Activated CD8-positive, alpha-beta T cell treated with anti-CD3 and anti-CD28 coated beads for 36 hours (primary cell): ENCODE measurements at regions of chr11 and their contacts with region 1.

Region 1: GRCh38 chr11:58567889-58568512 is 7.7 kb downstream of the LPXN start:
- DNase-seq: peak; percentile 89
- ATAC-seq: peak; percentile 97
- H3K4me3 Mint-ChIP-seq: peak overlapping the region; percentile 39
- H3K27ac Mint-ChIP-seq: peak overlapping the region; percentile 90
- H3K4me1 Mint-ChIP-seq: peaks cover 64% of the 10 kb centered on the region
- H3K27me3 Mint-ChIP-seq: no peaks in the 10 kb centered on the region
- CTCF ChIP-seq: peak; percentile 73

Region 2: GRCh38 chr11:58513747-58514367 is 54.1 kb before region 1 on chr11:
- CTCF ChIA-PET with region 1: no interaction called
- POLR2A ChIA-PET with region 1: no interaction called
- intact Hi-C with region 1: no loop called
- DNase-seq: peak; percentile 35
- ATAC-seq: peak; percentile 58
- H3K4me3 Mint-ChIP-seq: no peak overlapping the region
- H3K27ac Mint-ChIP-seq: no peak overlapping the region
- H3K4me1 Mint-ChIP-seq: no peaks in the 10 kb centered on the region
- H3K27me3 Mint-ChIP-seq: no peaks in the 10 kb centered on the region
- CTCF ChIP-seq: peak; percentile 47

Region 3: DNA sequence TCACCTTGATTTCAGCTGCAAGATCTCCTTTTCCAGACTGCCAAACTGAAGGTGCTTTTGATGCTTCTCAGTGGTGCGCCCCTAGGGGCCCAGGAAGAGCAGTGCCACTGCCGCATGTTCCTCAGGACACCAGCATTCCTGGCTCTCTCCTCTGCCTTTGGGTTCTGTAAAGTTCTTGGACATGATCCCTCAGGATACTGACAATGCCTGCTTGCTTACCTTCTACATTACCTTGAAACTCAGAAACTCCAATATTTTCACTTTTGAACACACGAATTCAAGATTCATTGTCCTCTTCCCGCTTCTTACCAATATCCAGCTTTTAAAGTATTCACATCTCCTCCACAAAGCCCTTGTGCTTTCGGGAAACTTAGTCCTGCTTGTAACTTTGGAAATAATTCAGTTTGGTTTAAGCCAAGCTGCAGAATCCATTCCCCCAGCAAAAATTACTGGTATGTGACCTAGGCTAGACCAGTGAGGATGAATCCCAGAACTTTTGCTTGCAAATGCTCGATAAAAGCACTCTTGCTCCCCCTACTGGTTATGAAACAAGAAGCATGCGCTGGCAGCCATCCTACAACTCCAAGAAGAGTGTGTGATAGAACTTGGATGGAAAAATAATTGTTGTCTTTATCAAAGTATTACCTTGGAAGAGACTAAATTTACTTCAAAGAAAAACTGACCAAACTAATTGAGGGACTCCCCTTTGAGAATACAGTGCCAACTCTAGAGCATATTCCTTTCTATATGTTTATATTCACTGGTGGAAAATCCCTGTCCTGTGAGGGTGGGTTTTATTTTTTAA is 43.6 kb before region 1 on chr11:
- CTCF ChIA-PET with region 1: interaction called, 35 read pairs
- POLR2A ChIA-PET with region 1: no interaction called
- intact Hi-C with region 1: loop called (anchors 2 kb)
- DNase-seq: peak; percentile 61
- ATAC-seq: peak; percentile 59
- H3K4me3 Mint-ChIP-seq: peak overlapping the region; percentile 72
- H3K27ac Mint-ChIP-seq: peak overlapping the region; percentile 96
- H3K4me1 Mint-ChIP-seq: peaks cover 62% of the 10 kb centered on the region
- H3K27me3 Mint-ChIP-seq: no peaks in the 10 kb centered on the region
- CTCF ChIP-seq: peak; percentile 90

Region 4: GRCh38 chr11:58597486-58598144 is 29.6 kb after region 1 on chr11:
- CTCF ChIA-PET with region 1: interaction called, 11 read pairs
- POLR2A ChIA-PET with region 1: no interaction called
- intact Hi-C with region 1: no loop called
- DNase-seq: no peak
- ATAC-seq: peak; percentile 87
- H3K4me3 Mint-ChIP-seq: no peak overlapping the region
- H3K27ac Mint-ChIP-seq: peak overlapping the region; percentile 43
- H3K4me1 Mint-ChIP-seq: peaks cover 85% of the 10 kb centered on the region
- H3K27me3 Mint-ChIP-seq: no peaks in the 10 kb centered on the region
- CTCF ChIP-seq: no peak

Region 5: GRCh38 chr11:58617976-58618557 is 50.1 kb after region 1 on chr11:
- CTCF ChIA-PET with region 1: interaction called, 13 read pairs
- POLR2A ChIA-PET with region 1: interaction called, 3 read pairs
- intact Hi-C with region 1: no loop called
- DNase-seq: peak; percentile 15
- ATAC-seq: peak; percentile 67
- H3K4me3 Mint-ChIP-seq: no peak overlapping the region
- H3K27ac Mint-ChIP-seq: peak overlapping the region; percentile 27
- H3K4me1 Mint-ChIP-seq: peaks cover 32% of the 10 kb centered on the region
- H3K27me3 Mint-ChIP-seq: no peaks in the 10 kb centered on the region
- CTCF ChIP-seq: peak; percentile 17

Region 6: GRCh38 chr11:58688789-58689503 is 120.9 kb after region 1 on chr11:
- CTCF ChIA-PET with region 1: interaction called, 11 read pairs
- POLR2A ChIA-PET with region 1: no interaction called
- intact Hi-C with region 1: no loop called
- DNase-seq: no peak
- ATAC-seq: no peak
- H3K4me3 Mint-ChIP-seq: no peak overlapping the region
- H3K27ac Mint-ChIP-seq: no peak overlapping the region
- H3K4me1 Mint-ChIP-seq: peaks cover 18% of the 10 kb centered on the region
- H3K27me3 Mint-ChIP-seq: no peaks in the 10 kb centered on the region
- CTCF ChIP-seq: no peak